CD8-positive, alpha-beta memory T cell (primary cell): ENCODE measurements at regions of chrX and their contacts with region 1.

Region 1: GRCh38 chrX:49043220-49043986 is at the start of gene TFE3:
- DNase-seq: peak; percentile 90 to 98 (median 94)
- H3K4me3 ChIP-seq: peak within 1 kb of the TSS; percentile 56
- H3K4me3 Mint-ChIP-seq: peak within 1 kb of the TSS; percentile 84 to 94 (median 88)
- H3K27ac ChIP-seq: peak within 1 kb of the TSS; percentile 84
- H3K27ac Mint-ChIP-seq: peak within 1 kb of the TSS; percentile 89 to 98 (median 96)
- H3K4me1 ChIP-seq: peaks cover 11% of the 10 kb centered on the region
- H3K4me1 Mint-ChIP-seq: peaks cover 34 to 36% (median 34%) of the 10 kb centered on the region in 3 donors
- H3K27me3 ChIP-seq: no peaks in the 10 kb centered on the region
- H3K27me3 Mint-ChIP-seq: peaks cover 0 to 11% of the 10 kb centered on the region in 2 donors
- total RNA-seq, gene TFE3: 32.4 to 35.4 TPM

Region 2: DNA sequence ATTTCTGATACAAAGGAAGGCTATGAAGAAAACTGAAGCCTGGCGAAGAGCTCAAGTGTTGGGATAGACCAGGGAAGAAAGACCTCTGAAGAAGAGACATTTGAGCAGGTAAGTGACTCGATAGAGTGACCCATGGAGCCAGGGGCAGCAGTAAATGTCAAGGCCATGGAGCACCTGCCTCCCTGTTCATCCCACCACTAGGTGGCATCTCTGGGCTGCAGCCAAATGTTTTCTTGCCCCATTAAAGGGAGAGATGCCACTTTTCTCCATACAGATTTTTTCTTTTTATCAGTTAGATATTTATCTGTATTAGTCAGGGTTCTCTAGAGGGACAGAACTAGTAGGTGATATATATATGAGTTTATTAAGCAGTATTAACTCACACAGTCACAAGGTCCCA is 1211.6 kb before region 1 on chrX:
- CTCF ChIA-PET with region 1: no interaction called
- POLR2A ChIA-PET with region 1: no interaction called
- DNase-seq: peak; percentile 23 to 70 (median 43)
- H3K4me3 ChIP-seq: no peak overlapping the region
- H3K4me3 Mint-ChIP-seq: no peak overlapping the region
- H3K27ac ChIP-seq: no peak overlapping the region
- H3K27ac Mint-ChIP-seq: no peak overlapping the region
- H3K4me1 ChIP-seq: peaks cover 7% of the 10 kb centered on the region
- H3K4me1 Mint-ChIP-seq: peaks cover 6 to 10% (median 6%) of the 10 kb centered on the region in 3 donors
- H3K27me3 ChIP-seq: no peaks in the 10 kb centered on the region
- H3K27me3 Mint-ChIP-seq: peaks cover 0 to 7% of the 10 kb centered on the region in 2 donors

Region 3: GRCh38 chrX:49053223-49054072 is 10.0 kb after region 1 on chrX:
- CTCF ChIA-PET with region 1: interaction called, 6 read pairs
- POLR2A ChIA-PET with region 1: interaction called, 13 read pairs
- DNase-seq: peak; percentile 37 to 79 (median 51)
- H3K4me3 ChIP-seq: peak overlapping the region; percentile 41
- H3K4me3 Mint-ChIP-seq: peak overlapping the region; percentile 79 to 95 (median 85)
- H3K27ac ChIP-seq: peak overlapping the region; percentile 51
- H3K27ac Mint-ChIP-seq: peak overlapping the region; percentile 56 to 96 (median 94)
- H3K4me1 ChIP-seq: peaks cover 14% of the 10 kb centered on the region
- H3K4me1 Mint-ChIP-seq: peaks cover 22 to 41% (median 32%) of the 10 kb centered on the region in 3 donors
- H3K27me3 ChIP-seq: no peaks in the 10 kb centered on the region
- H3K27me3 Mint-ChIP-seq: peaks cover 0 to 9% of the 10 kb centered on the region in 2 donors